B cell (primary cell): ENCODE measurements at regions of chr11 and their contacts with region 1.

Region 1: DNA sequence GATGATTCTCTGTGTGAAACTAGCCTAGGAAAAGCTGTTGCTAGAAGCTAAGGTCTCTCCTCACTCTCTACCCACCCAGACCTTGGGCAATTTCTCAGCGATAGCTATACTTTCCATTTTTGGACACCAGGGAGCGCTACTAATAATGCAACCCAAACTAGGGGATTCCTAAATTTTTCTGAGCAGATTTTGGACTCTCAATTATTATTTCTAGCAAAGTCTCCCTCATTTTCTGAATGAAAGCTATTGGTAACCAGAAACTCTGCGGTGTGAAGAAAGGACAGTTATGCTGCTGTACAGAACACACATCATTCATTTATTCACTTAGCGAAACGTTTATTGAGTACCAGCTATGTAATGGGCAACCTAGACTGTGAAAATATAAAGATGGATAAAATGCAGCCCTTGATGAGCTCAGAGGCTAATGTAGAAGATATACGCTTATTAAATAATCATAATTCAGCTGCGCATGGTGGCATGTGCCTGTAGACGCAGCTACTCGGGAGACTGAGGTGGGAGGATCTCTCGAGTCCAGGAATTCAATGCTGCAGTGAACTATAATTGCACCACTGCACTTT is 6.1 kb upstream of the STIM1 start:
- DNase-seq: peak; percentile 80
- ATAC-seq: peak; percentile 64
- H3K4me3 ChIP-seq: no peak overlapping the region
- H3K4me3 Mint-ChIP-seq: no peak overlapping the region
- H3K27ac ChIP-seq: no peak overlapping the region
- H3K27ac Mint-ChIP-seq: no peak overlapping the region
- H3K4me1 ChIP-seq: peaks cover 24% of the 10 kb centered on the region in 2 donors
- H3K4me1 Mint-ChIP-seq: peaks cover 23% of the 10 kb centered on the region
- H3K27me3 ChIP-seq: no peaks in the 10 kb centered on the region
- H3K27me3 Mint-ChIP-seq: no peaks in the 10 kb centered on the region
- CTCF ChIP-seq: peak; percentile 83

Region 2: GRCh38 chr11:3824714-3825472 is 24.5 kb before region 1 on chr11:
- CTCF ChIA-PET with region 1: interaction called, 662 read pairs
- POLR2A ChIA-PET with region 1: no interaction called
- intact Hi-C with region 1: no loop called
- DNase-seq: peak; percentile 83
- ATAC-seq: peak; percentile 96
- H3K4me3 ChIP-seq: no peak overlapping the region
- H3K4me3 Mint-ChIP-seq: no peak overlapping the region
- H3K27ac ChIP-seq: peak overlapping the region in 1 of 2 donors; percentile 74
- H3K27ac Mint-ChIP-seq: peak overlapping the region; percentile 69
- H3K4me1 ChIP-seq: peaks cover 13 to 15% of the 10 kb centered on the region in 2 donors
- H3K4me1 Mint-ChIP-seq: peaks cover 26% of the 10 kb centered on the region
- H3K27me3 ChIP-seq: no peaks in the 10 kb centered on the region
- H3K27me3 Mint-ChIP-seq: no peaks in the 10 kb centered on the region
- CTCF ChIP-seq: peak; percentile 81

Region 3: DNA sequence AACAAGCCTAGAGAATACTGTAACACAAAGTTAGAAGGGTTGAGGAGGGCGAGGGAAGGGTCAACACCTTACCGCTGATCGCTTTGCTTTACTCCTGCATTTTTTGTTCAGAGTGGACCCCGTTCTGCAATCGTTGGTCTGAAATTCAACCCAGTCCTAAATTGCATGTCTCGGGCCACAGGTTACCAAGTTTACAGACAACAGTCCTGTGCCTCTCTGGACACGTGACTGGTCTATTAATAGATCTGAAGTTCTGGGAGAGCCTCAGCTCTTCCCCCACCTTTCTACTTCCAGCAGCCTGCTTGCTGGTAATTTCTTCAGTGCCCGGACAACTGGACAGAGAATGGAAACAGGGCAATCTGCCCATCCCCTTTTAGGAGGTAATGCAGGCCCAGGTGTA is 80.3 kb after region 1 on chr11:
- CTCF ChIA-PET with region 1: interaction called, 33 read pairs
- POLR2A ChIA-PET with region 1: interaction called, 6 read pairs
- intact Hi-C with region 1: no loop called
- DNase-seq: no peak
- ATAC-seq: no peak
- H3K4me3 ChIP-seq: no peak overlapping the region
- H3K4me3 Mint-ChIP-seq: no peak overlapping the region
- H3K27ac ChIP-seq: peak overlapping the region in 1 of 2 donors; percentile 5
- H3K27ac Mint-ChIP-seq: no peak overlapping the region
- H3K4me1 ChIP-seq: peaks cover 31 to 33% of the 10 kb centered on the region in 2 donors
- H3K4me1 Mint-ChIP-seq: peaks cover 62% of the 10 kb centered on the region
- H3K27me3 ChIP-seq: no peaks in the 10 kb centered on the region
- H3K27me3 Mint-ChIP-seq: no peaks in the 10 kb centered on the region
- CTCF ChIP-seq: no peak

Region 4: GRCh38 chr11:3971756-3972404 is 122.5 kb after region 1 on chr11:
- CTCF ChIA-PET with region 1: interaction called, 35 read pairs
- POLR2A ChIA-PET with region 1: interaction called, 6 read pairs
- intact Hi-C with region 1: loop called (anchors 2 kb)
- DNase-seq: peak; percentile 33
- ATAC-seq: no peak
- H3K4me3 ChIP-seq: no peak overlapping the region
- H3K4me3 Mint-ChIP-seq: no peak overlapping the region
- H3K27ac ChIP-seq: peak overlapping the region in 1 of 2 donors; percentile 19
- H3K27ac Mint-ChIP-seq: no peak overlapping the region
- H3K4me1 ChIP-seq: no peaks in the 10 kb centered on the region
- H3K4me1 Mint-ChIP-seq: peaks cover 23% of the 10 kb centered on the region
- H3K27me3 ChIP-seq: no peaks in the 10 kb centered on the region
- H3K27me3 Mint-ChIP-seq: no peaks in the 10 kb centered on the region
- CTCF ChIP-seq: peak; percentile 35

Region 5: GRCh38 chr11:4044976-4045646 is 195.7 kb after region 1 on chr11:
- CTCF ChIA-PET with region 1: interaction called, 24 read pairs
- POLR2A ChIA-PET with region 1: interaction called, 5 read pairs
- intact Hi-C with region 1: no loop called
- DNase-seq: no peak
- ATAC-seq: no peak
- H3K4me3 ChIP-seq: no peak overlapping the region
- H3K4me3 Mint-ChIP-seq: no peak overlapping the region
- H3K27ac ChIP-seq: no peak overlapping the region
- H3K27ac Mint-ChIP-seq: peak overlapping the region; percentile 20
- H3K4me1 ChIP-seq: no peaks in the 10 kb centered on the region
- H3K4me1 Mint-ChIP-seq: peaks cover 9% of the 10 kb centered on the region
- H3K27me3 ChIP-seq: no peaks in the 10 kb centered on the region
- H3K27me3 Mint-ChIP-seq: no peaks in the 10 kb centered on the region
- CTCF ChIP-seq: no peak

Region 6: GRCh38 chr11:4086575-4087353 is 237.4 kb after region 1 on chr11:
- CTCF ChIA-PET with region 1: interaction called, 11 read pairs
- POLR2A ChIA-PET with region 1: no interaction called
- intact Hi-C with region 1: no loop called
- DNase-seq: no peak
- ATAC-seq: no peak
- H3K4me3 ChIP-seq: no peak overlapping the region
- H3K4me3 Mint-ChIP-seq: no peak overlapping the region
- H3K27ac ChIP-seq: no peak overlapping the region
- H3K27ac Mint-ChIP-seq: no peak overlapping the region
- H3K4me1 ChIP-seq: peaks cover 0 to 10% of the 10 kb centered on the region in 2 donors
- H3K4me1 Mint-ChIP-seq: peaks cover 7% of the 10 kb centered on the region
- H3K27me3 ChIP-seq: no peaks in the 10 kb centered on the region
- H3K27me3 Mint-ChIP-seq: no peaks in the 10 kb centered on the region
- CTCF ChIP-seq: no peak